WTC11 (cell line): ENCODE measurements at regions of chr10 and their contacts with region 1.

Region 1: DNA sequence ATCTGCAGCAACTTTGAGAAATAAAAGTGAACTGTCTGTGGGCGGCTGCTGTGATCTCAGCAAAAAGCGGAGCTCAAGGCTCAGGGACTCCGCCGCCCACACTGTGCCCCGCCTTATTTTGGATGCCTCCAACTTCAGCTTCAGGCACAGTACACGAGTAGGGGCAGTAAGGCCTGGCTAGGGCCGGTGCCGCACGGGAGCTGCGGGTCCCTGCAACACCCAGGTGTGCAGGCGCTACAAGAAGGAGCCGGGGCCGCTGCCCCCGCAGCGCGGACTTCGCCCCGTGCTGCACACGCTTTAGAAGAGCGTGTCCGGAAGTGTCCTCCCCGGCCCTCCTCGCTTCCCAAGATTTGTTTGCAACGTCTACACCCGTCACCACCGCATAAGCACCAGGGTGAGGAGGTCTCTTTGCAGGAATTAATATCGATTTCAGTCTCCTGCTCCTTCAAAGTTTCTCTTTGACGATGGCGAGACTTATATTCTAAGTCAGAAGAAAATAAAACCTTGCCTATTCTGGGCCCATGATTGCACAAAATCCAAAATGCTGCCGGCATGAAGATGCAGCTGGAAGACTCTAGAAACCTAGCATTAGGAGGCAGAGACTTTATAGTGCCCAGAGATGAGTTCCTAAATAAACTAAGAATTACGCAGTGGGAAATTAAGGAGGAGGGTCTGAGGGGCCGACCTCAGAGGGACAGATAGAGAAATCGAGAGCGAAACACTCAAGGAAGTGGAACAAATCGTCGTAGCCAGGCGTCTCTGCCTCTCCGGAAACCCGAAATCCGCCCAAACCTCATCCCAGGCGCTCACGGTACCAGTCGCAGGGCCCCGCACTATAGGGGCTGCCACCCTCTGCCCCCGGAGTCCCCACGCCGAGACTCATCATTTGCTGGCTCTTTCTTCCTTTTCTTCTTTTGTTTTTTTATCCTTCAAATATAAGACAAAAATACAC is 6.4 kb downstream of the VAX1 start:
- DNase-seq: peak; percentile 47
- ATAC-seq: peak; percentile 23
- H3K4me3 Mint-ChIP-seq: peak overlapping the region; percentile 54
- H3K27ac Mint-ChIP-seq: no peak overlapping the region
- H3K4me1 Mint-ChIP-seq: peaks cover 56% of the 10 kb centered on the region
- H3K27me3 Mint-ChIP-seq: peaks cover 98% of the 10 kb centered on the region
- CTCF ChIP-seq: no peak

Region 2: DNA sequence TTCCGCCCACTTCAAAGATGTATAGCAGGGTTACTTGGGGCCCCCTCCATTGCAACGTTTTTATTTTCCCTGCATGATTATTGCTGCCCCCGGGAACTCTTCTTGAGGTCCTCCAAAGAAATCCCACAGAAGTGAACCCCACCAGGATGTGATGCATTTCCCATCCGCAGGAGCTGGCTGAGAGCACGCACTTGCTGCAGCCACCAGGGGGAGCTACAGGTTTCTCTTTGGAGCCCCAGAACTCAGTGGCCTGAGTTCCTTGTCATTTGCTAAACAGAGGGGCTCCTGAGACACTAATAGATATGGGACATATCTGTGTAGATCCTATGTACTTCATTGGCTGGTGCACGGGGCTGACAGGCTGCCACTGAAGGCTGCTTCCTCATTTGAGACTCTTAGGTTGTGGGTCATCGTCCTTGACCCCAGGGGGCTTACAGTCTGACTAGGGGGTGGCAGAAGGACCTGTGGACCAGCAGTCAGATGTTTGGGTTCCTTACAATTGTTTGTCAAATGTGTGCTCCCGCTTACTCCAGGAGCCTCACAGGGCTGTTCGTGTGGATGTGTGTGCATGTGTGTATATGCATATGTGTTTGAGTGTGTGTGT is 334.6 kb before region 1 on chr10:
- CTCF ChIA-PET with region 1: interaction called, 14 read pairs
- POLR2A ChIA-PET with region 1: no interaction called
- DNase-seq: peak; percentile 86
- ATAC-seq: peak; percentile 89
- H3K4me3 Mint-ChIP-seq: no peak overlapping the region
- H3K27ac Mint-ChIP-seq: no peak overlapping the region
- H3K4me1 Mint-ChIP-seq: peaks cover 25% of the 10 kb centered on the region
- H3K27me3 Mint-ChIP-seq: peaks cover 8% of the 10 kb centered on the region
- CTCF ChIP-seq: peak; percentile 85

Region 3: GRCh38 chr10:117112220-117112619 is 19.4 kb before region 1 on chr10:
- CTCF ChIA-PET with region 1: interaction called, 13 read pairs
- POLR2A ChIA-PET with region 1: no interaction called
- DNase-seq: no peak
- ATAC-seq: no peak; the same call in 1 of the 2 replicates
- H3K4me3 Mint-ChIP-seq: no peak overlapping the region
- H3K27ac Mint-ChIP-seq: no peak overlapping the region
- H3K4me1 Mint-ChIP-seq: no peaks in the 10 kb centered on the region
- H3K27me3 Mint-ChIP-seq: peaks cover 16% of the 10 kb centered on the region
- CTCF ChIP-seq: no peak